Sigmoid colon (tissue), 7 donors: ENCODE measurements at regions of chr9 and their contacts with region 1.

Region 1: GRCh38 chr9:104927912-104928740 is at the start of gene ABCA1:
- DNase-seq: peak; percentile 99
- H3K4me3 ChIP-seq: peak within 1 kb of the TSS; percentile 83 to 97 (median 94)
- H3K27ac ChIP-seq: peak within 1 kb of the TSS; percentile 89 to 98 (median 96)
- H3K4me1 ChIP-seq: peaks cover 0 to 41% (median 37%) of the 10 kb centered on the region in 4 donors
- H3K27me3 ChIP-seq: no peaks in the 10 kb centered on the region
- CTCF ChIP-seq: no peak
- EP300 ChIP-seq: no peak
- POLR2A ChIP-seq: peak; percentile 89 to 95
- total RNA-seq, gene ABCA1: 76.7 to 110 (median 91.3) TPM

Region 2: DNA sequence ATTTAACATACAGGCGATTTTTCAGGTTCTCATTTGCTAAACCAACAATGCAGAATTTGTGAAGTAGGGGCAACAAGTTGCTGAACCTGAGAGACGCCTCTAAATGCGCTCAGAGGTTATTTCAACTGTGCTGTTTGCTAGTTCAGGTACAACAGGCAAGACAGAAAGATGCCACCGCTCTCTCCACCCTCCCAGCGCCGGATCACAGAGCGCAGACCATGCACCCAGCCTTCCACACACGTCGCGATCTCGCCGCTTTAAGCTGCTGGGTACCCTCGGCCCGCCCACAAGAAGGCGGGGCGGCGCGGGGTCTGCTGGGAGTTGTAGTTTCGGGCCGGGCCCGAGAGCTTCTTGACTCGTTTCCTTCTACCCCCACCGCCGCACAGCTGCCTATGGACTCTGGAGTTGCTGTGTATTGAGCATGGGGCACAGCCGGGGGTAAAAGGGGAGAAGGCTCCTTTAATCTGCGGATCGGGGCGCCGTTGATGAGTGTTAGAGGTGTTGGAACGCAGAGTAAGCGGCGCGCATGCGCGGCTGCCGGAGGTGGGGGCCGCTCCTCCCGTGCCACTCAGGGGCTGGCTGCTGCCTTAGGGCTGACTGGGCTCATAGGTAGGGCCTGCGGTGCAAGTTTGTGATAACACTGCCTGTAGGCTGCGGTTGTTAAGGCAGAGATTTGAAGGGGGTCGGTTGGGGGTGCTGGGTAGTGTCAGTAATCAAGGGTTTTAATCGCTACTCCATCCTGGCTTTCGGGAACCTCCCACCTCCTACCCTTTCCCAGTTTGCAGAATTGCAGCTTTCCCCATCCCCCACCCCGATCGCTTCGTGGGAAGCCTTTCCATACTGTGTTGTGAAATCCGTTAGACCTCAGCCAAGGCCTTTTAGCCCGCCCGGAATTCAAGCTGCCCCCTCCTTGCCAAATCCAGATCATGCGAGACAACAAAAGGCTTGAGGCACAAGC is 40.2 kb after region 1 on chr9:
- intact Hi-C with region 1: loop called (anchors 1 kb)
- DNase-seq: peak; percentile 97
- H3K4me3 ChIP-seq: peak overlapping the region; percentile 46 to 74 (median 64)
- H3K27ac ChIP-seq: peak overlapping the region; percentile 85 to 98 (median 94)
- H3K4me1 ChIP-seq: peaks cover 0 to 40% (median 30%) of the 10 kb centered on the region in 4 donors
- H3K27me3 ChIP-seq: no peaks in the 10 kb centered on the region
- CTCF ChIP-seq: no peak
- EP300 ChIP-seq: peak in 3 of 4 donors; percentile 39 to 82 (median 43)
- POLR2A ChIP-seq: peak; percentile 50 to 54

Region 3: GRCh38 chr9:105064315-105065097 is 136.4 kb after region 1 on chr9:
- intact Hi-C with region 1: loop called (anchors 2 kb)
- DNase-seq: peak; percentile 99
- H3K4me3 ChIP-seq: no peak overlapping the region
- H3K27ac ChIP-seq: peak overlapping the region; percentile 83 to 87 (median 87)
- H3K4me1 ChIP-seq: peaks cover 0 to 38% (median 26%) of the 10 kb centered on the region in 4 donors
- H3K27me3 ChIP-seq: no peaks in the 10 kb centered on the region
- CTCF ChIP-seq: no peak
- EP300 ChIP-seq: peak; percentile 68 to 89 (median 86)
- POLR2A ChIP-seq: peak; percentile 24 to 47

Region 4: GRCh38 chr9:105244003-105244733 is 316.0 kb after region 1 on chr9 and contains the start of gene SLC44A1:
- intact Hi-C with region 1: loop called (anchors 1 kb)
- DNase-seq: peak; percentile 98
- H3K4me3 ChIP-seq: peak within 1 kb of the TSS; percentile 72 to 92 (median 84)
- H3K27ac ChIP-seq: peak within 1 kb of the TSS; percentile 78 to 84 (median 82)
- H3K4me1 ChIP-seq: peaks cover 0 to 31% (median 18%) of the 10 kb centered on the region in 4 donors
- H3K27me3 ChIP-seq: no peaks in the 10 kb centered on the region
- CTCF ChIP-seq: no peak
- EP300 ChIP-seq: no peak
- POLR2A ChIP-seq: no peak
- total RNA-seq, gene SLC44A1: 19.7 to 35.4 (median 26.0) TPM